HEK293 (cell line): ENCODE measurements at regions of chr17 and their contacts with region 1.

Region 1: GRCh38 chr17:28726226-28727130 is at the start of gene TLCD1:
- H3K4me3 ChIP-seq: peak within 1 kb of the TSS; percentile 55
- H3K27ac ChIP-seq: peak within 1 kb of the TSS; percentile 99
- H3K4me1 ChIP-seq: peaks cover 9% of the 10 kb centered on the region; the same call in 1 of the 2 replicates
- CTCF ChIP-seq: peak; percentile 100

Region 2: DNA sequence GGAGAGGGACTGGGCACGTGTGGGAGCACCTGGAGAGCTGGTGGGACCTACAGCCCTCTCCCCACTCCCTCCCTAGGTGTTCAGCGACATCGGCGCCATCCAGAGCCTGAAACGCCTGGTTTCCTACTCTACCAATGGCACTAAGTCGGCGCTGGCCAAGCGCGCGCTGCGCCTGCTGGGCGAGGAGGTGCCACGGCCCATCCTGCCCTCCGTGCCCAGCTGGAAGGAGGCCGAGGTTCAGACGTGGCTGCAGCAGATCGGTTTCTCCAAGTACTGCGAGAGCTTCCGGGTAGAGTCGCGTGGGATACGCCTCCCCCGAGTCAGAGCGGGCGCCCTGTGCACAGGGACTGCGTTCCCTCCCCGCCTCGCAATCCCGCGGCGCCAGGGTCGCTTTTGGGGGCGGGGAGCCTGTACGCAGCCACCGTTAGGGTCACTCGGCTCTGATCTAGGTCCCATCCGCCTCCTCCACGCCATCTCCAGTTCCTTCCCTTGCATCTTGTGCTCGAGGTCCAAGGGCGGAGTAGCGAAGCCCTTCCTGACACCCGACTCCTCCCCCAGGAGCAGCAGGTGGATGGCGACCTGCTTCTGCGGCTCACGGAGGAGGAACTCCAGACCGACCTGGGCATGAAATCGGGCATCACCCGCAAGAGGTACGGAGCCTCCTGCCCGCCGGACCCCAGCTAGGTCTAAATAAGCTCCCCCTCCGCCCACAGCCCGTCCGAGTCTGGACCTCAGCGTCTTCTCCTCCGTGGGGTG is 342.0 kb before region 1 on chr17:
- CTCF ChIA-PET with region 1: no interaction called
- POLR2A ChIA-PET with region 1: no interaction called
- H3K4me3 ChIP-seq: no peak overlapping the region
- H3K27ac ChIP-seq: no peak overlapping the region
- H3K4me1 ChIP-seq: peaks cover 2% of the 10 kb centered on the region; the same call in 1 of the 2 replicates
- CTCF ChIP-seq: no peak

Region 3: GRCh38 chr17:28661635-28662537 is 64.6 kb before region 1 on chr17 and contains the starts of genes SDF2 and SUPT6H:
- CTCF ChIA-PET with region 1: interaction called, 3 read pairs
- POLR2A ChIA-PET with region 1: interaction called, 29 read pairs
- H3K4me3 ChIP-seq: peak within 1 kb of the TSS; percentile 78
- H3K27ac ChIP-seq: peak within 1 kb of the TSS; percentile 81
- H3K4me1 ChIP-seq: peaks cover 7% of the 10 kb centered on the region
- CTCF ChIP-seq: peak; percentile 8; the same call in 1 of the 2 replicates

Region 4: GRCh38 chr17:28756025-28756804 is 29.7 kb after region 1 on chr17:
- CTCF ChIA-PET with region 1: interaction called, 445 read pairs
- POLR2A ChIA-PET with region 1: interaction called, 448 read pairs
- H3K4me3 ChIP-seq: no peak overlapping the region
- H3K27ac ChIP-seq: peak overlapping the region; percentile 11; the same call in 1 of the 2 replicates
- H3K4me1 ChIP-seq: peaks cover 3% of the 10 kb centered on the region; the same call in 1 of the 2 replicates
- CTCF ChIP-seq: no peak

Region 5: DNA sequence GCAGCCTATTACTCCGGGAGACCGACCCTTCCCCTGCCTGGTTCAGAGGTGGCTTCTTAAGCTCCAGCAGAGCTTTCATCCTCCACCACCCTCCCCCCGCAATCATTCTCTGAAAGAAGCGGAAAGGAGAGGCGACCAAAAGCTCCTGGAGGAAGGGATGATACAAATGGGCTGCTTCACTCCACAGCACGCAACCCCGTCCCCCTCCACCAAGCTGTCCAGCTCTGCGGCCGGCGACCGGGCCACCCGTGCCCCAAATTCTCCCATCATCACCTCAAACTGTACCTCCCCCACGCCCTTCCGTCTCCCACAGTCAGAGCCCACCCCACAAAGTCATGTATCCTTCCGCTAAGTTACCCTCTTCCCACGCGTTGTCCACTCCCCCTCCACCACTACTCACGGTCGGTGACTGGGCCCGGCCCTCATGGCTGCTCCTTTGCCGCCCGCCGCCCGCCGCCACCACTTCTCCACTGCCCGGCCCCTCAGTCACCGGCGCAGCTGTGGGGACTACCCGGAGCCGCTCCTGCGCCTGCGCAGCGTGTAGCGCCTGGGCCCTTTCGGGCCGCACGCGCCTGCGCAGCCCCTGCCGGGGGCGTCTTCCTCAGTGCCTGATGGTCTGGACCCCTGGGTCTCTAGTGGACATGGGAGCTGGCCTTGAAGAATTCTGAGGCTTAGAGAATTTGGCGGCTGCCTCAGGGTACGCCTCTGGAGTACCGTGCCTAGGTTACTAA is 116.0 kb after region 1 on chr17 and contains the start of gene FAM222B:
- CTCF ChIA-PET with region 1: interaction called, 8 read pairs
- POLR2A ChIA-PET with region 1: interaction called, 24 read pairs
- H3K4me3 ChIP-seq: peak within 1 kb of the TSS; percentile 95
- H3K27ac ChIP-seq: peak within 1 kb of the TSS; percentile 77
- H3K4me1 ChIP-seq: 0 out of 2 replicates have a peak, but pooled peaks cover 2% of the 10 kb centered on the region
- CTCF ChIP-seq: peak; percentile 31

Region 6: GRCh38 chr17:28916302-28916934 is 189.9 kb after region 1 on chr17:
- CTCF ChIA-PET with region 1: interaction called, 23 read pairs
- POLR2A ChIA-PET with region 1: interaction called, 4 read pairs
- H3K4me3 ChIP-seq: no peak overlapping the region
- H3K27ac ChIP-seq: no peak overlapping the region
- H3K4me1 ChIP-seq: no peaks in the 10 kb centered on the region
- CTCF ChIP-seq: peak; percentile 58; the same call in 1 of the 2 replicates

Region 7: DNA sequence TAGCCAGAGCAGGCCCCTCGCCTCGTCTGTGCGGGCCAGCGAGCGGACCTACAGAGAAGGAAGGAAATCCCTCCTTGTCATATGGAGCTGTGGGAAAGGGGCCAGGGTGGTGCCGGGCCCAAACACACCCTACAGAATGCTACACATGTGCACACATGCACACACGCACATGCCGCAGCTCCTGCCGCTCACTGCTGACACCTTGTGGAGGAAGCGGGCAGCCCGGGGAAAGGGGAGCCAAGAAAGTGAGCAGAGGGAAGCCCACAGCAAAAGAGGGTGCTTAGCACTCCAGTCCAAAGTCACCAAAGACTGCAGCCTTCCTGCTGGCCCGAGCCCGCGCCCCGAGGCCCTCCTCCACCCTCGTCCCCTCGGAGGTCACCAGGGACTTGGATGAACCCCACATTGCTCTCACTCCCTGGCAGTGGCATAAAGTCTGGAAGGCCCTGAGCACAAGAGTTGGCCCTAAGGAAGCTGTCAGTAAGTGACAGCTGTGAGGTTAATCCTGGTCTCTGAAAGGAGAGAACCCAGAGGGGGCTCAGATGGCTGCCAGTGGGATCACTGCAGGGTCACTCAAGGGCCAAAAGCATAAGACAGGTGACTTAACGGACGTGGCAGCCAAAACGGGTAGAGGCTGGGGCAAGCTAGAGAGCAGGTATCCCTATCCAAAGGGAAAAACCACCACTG is 385.5 kb after region 1 on chr17:
- CTCF ChIA-PET with region 1: interaction called, 34 read pairs
- POLR2A ChIA-PET with region 1: interaction called, 13 read pairs
- H3K4me3 ChIP-seq: no peak overlapping the region
- H3K27ac ChIP-seq: no peak overlapping the region
- H3K4me1 ChIP-seq: no peaks in the 10 kb centered on the region
- CTCF ChIP-seq: peak; percentile 93

Region 8: DNA sequence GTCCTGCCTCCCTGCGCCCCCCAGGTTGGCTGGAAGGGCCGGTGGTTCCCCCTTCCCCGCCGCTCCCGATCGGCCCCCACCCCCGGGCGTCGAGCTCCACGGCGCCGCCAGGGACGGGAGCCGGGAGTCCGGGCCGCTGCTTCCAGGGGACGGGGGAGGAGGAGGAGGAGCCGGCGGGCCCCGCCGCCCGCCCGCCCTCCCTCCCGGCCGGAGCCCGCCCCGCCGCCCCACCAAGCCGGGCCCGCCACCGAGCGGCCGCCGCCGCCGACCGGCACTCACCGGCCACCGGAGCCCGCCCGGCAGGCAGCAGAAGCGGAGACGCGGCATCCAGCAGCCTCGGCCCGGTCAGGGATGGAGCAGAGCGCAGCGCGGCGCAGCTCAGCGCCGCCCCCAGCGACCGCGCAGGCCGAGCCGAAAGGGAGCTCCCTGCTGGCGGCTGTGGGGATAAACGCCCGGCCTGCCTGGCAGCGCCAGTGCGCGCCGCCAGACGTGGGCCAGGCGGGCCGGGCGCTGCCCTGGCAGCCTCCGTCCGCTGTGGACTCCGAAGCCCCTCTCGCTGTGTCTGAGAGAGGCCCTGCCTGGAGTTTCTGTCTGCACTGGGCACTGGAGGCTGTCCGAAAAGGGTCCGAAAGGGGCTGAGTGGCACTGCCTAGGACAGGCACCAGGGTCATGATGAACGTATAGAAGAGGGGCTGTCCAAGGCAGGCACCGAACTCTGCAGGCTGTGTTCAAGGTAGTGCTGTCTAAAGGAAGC is 453.7 kb after region 1 on chr17 and contains the start of gene MYO18A:
- CTCF ChIA-PET with region 1: no interaction called
- POLR2A ChIA-PET with region 1: no interaction called
- H3K4me3 ChIP-seq: peak within 1 kb of the TSS; percentile 57
- H3K27ac ChIP-seq: peak within 1 kb of the TSS; percentile 20; the same call in 1 of the 2 replicates
- H3K4me1 ChIP-seq: peaks cover 3% of the 10 kb centered on the region; the same call in 1 of the 2 replicates
- CTCF ChIP-seq: peak; percentile 92